Endothelial cell of umbilical vein (primary cell): ENCODE measurements at regions of chr5 and their contacts with region 1.

Region 1: DNA sequence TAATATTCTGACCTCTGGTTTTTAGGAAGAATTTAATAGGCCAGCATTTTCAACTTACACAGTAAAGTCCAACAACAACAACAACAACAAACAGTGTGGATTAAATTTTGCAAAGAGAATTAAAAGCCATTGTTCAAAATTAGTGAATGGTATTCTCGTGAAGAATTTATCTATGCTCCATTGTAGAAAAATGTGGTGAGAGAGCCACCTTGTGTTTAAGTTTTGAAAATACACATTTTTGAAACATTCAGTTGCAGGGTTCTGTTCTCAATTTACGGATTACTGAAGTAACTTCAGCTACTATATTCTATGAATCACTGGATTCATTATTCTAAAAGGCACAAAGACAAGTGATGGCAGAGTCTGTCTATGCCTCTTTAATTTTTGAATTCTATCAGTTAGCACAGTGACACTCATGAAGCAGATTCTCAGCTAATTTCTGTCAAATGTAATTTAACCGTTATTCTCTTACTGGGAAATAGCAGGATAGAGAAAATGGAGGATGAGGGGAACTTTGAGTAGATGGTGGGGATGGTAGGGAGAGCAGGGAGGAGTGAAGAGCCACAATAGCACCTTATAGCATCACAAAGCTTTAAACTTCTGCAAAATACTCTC is 11.0 kb downstream of the CCDC152 start:
- DNase-seq: peak; percentile 39
- H3K4me3 ChIP-seq: no peak overlapping the region
- H3K27ac ChIP-seq: no peak overlapping the region
- H3K4me1 ChIP-seq: no peaks in the 10 kb centered on the region
- H3K27me3 ChIP-seq: no peaks in the 10 kb centered on the region
- CTCF ChIP-seq: peak; percentile 19 to 20
- POLR2A ChIP-seq: no peak

Region 2: GRCh38 chr5:41856644-41857491 is 910.7 kb before region 1 on chr5:
- CTCF ChIA-PET with region 1: interaction called, 31 read pairs
- POLR2A ChIA-PET with region 1: no interaction called
- dilution Hi-C with region 1: no loop called
- intact Hi-C with region 1: loop called (anchors 1 kb)
- DNase-seq: peak; percentile 77
- H3K4me3 ChIP-seq: no peak overlapping the region
- H3K27ac ChIP-seq: no peak overlapping the region
- H3K4me1 ChIP-seq: no peaks in the 10 kb centered on the region
- H3K27me3 ChIP-seq: no peaks in the 10 kb centered on the region
- CTCF ChIP-seq: peak; percentile 61
- POLR2A ChIP-seq: no peak

Region 3: GRCh38 chr5:42005561-42006153 is 761.9 kb before region 1 on chr5:
- CTCF ChIA-PET with region 1: interaction called, 19 read pairs
- POLR2A ChIA-PET with region 1: no interaction called
- dilution Hi-C with region 1: no loop called
- intact Hi-C with region 1: loop called (anchors 1 kb)
- DNase-seq: peak; percentile 21
- H3K4me3 ChIP-seq: no peak overlapping the region
- H3K27ac ChIP-seq: no peak overlapping the region
- H3K4me1 ChIP-seq: no peaks in the 10 kb centered on the region
- H3K27me3 ChIP-seq: no peaks in the 10 kb centered on the region
- CTCF ChIP-seq: peak; percentile 49 to 60
- POLR2A ChIP-seq: no peak

Region 4: GRCh38 chr5:42423285-42424165 is 344.1 kb before region 1 on chr5 and contains the start of gene GHR:
- CTCF ChIA-PET with region 1: interaction called, 25 read pairs
- POLR2A ChIA-PET with region 1: no interaction called
- dilution Hi-C with region 1: no loop called
- intact Hi-C with region 1: loop called (anchors 1 kb)
- DNase-seq: peak; percentile 89
- H3K4me3 ChIP-seq: peak within 1 kb of the TSS; percentile 8 to 39 (median 18)
- H3K27ac ChIP-seq: no peak within 1 kb of the TSS
- H3K4me1 ChIP-seq: peaks cover 4% of the 10 kb centered on the region
- H3K27me3 ChIP-seq: peaks cover 12% of the 10 kb centered on the region in 2 experiments
- CTCF ChIP-seq: peak; percentile 60 to 74
- POLR2A ChIP-seq: no peak
- total RNA-seq, gene GHR: 0.27 and 0.39 TPM in 2 replicates

Region 5: DNA sequence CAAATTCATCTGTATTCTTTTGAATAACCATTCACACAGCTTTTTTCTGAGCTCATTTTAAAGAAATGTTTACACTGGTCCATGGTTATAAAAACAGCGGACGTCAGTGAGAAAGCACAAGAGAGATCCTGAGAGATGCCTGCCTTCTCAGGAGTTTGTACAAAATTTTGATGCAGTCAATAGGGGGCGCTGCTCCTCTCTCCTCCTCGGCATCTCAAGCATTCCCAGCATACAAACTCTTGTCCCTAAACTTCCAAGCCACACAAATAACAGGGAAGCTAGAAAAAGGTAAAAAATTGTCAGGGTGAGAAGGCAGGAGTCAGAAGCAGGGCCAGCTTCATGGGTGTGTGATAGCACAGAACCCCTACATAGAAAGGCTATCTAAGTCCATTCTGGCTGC is 22.2 kb before region 1 on chr5:
- CTCF ChIA-PET with region 1: interaction called, 19 read pairs
- POLR2A ChIA-PET with region 1: no interaction called
- dilution Hi-C with region 1: no loop called
- intact Hi-C with region 1: no loop called
- DNase-seq: no peak
- H3K4me3 ChIP-seq: no peak overlapping the region
- H3K27ac ChIP-seq: no peak overlapping the region
- H3K4me1 ChIP-seq: no peaks in the 10 kb centered on the region
- H3K27me3 ChIP-seq: peaks cover 0 to 2% of the 10 kb centered on the region in 2 experiments
- CTCF ChIP-seq: peak; percentile 40 to 49
- POLR2A ChIP-seq: no peak

Region 6: GRCh38 chr5:42753099-42753498 is 14.5 kb before region 1 on chr5:
- CTCF ChIA-PET with region 1: interaction called, 12 read pairs
- POLR2A ChIA-PET with region 1: no interaction called
- dilution Hi-C with region 1: no loop called
- intact Hi-C with region 1: no loop called
- DNase-seq: no peak
- H3K4me3 ChIP-seq: no peak overlapping the region
- H3K27ac ChIP-seq: no peak overlapping the region
- H3K4me1 ChIP-seq: no peaks in the 10 kb centered on the region
- H3K27me3 ChIP-seq: no peaks in the 10 kb centered on the region
- CTCF ChIP-seq: no peak
- POLR2A ChIP-seq: no peak

Region 7: DNA sequence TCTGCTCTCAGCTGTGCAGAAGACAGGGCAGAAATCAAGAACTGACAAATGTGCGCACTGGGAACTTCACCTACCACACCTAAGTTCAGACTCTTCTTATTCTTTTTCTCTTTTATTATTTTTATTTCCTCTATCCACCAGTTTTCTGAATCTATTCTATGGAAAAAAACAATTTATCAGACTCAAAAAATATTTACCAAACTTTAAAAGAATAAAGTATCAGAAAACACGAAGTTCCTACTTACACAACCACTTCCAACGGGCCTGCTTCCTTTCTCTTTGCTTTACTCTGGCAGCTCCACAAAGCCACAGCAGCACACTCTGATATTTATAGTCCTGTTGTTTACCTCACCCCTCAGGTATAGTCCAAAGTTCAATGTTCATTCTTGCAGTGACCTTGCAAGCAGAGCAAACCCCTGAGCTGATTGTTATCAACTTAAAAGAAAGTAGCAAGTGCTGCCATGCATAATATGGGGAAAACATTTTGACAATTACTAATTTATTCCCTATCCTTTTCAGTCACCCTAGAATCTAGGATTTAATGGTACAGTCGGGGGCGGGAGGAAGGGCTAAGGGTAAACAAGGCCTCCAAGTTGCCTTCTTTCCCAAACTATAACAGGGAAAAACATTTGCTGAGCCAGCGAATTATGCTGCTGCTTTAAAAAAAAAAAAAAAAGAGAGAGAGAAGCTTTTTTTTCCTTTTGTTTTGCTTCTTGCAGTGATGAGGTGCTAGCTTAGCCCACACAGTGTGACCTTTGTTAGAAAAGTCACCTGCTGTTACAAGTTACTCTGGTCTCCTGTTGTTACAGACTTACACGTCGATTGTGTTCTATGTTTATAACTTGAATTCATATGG is 44.2 kb after region 1 on chr5 and contains the start of gene SELENOP:
- CTCF ChIA-PET with region 1: no interaction called
- POLR2A ChIA-PET with region 1: no interaction called
- dilution Hi-C with region 1: no loop called
- intact Hi-C with region 1: no loop called
- DNase-seq: peak; percentile 8
- H3K4me3 ChIP-seq: no peak within 1 kb of the TSS
- H3K27ac ChIP-seq: no peak within 1 kb of the TSS
- H3K4me1 ChIP-seq: no peaks in the 10 kb centered on the region
- H3K27me3 ChIP-seq: no peaks in the 10 kb centered on the region
- CTCF ChIP-seq: no peak
- POLR2A ChIP-seq: no peak
- total RNA-seq, gene SELENOP: 1.5 TPM in 1 of 2 replicates, not detected in the other